ENCODE measurements at regions of chr16 and their contacts with region 1.

Region 1: GRCh38 chr16:77599793-77600415 is 122.4 kb upstream of the NUDT7 start:
- DNase-seq: peak in 1 of 2 donors; percentile 19
- ATAC-seq: no peak
- H3K4me3 ChIP-seq: no peak overlapping the region
- H3K27ac ChIP-seq: no peak overlapping the region
- H3K4me1 ChIP-seq: peaks cover 0 to 15% (median 0%) of the 10 kb centered on the region in 9 donors
- H3K27me3 ChIP-seq: no peaks in the 10 kb centered on the region
- CTCF ChIP-seq: peak; percentile 27 to 78 (median 67)

Region 2: GRCh38 chr16:77211880-77212740 is 387.8 kb before region 1 on chr16:
- intact Hi-C with region 1: no loop called
- DNase-seq: peak; percentile 17 to 53
- ATAC-seq: peak; percentile 52 to 67 (median 64)
- H3K4me3 ChIP-seq: peak overlapping the region; percentile 54 to 74 (median 64)
- H3K27ac ChIP-seq: peak overlapping the region in 8 of 10 donors; percentile 9 to 83 (median 63)
- H3K4me1 ChIP-seq: peaks cover 3 to 26% (median 23%) of the 10 kb centered on the region in 9 donors
- H3K27me3 ChIP-seq: peaks cover 0 to 22% (median 11%) of the 10 kb centered on the region in 7 donors
- CTCF ChIP-seq: no peak

Region 3: DNA sequence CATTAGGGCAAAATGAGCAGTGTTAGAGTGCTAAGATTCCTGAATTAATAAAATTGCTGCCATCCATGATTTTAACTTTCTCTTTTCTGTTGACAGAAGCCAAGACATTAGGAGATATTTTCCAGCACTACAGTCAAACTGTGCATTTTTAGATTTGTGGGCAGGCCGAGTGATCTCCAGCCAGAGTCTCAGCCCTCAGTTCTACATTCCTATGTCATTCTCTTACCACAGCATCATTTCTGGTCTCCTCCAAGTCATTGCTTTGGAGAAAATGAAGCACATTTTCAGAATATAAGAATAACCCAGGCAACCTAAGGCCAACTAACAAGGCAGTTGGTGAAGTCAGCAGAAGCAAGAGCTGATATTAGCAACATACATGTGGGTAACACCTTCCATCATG is 47.8 kb after region 1 on chr16:
- intact Hi-C with region 1: loop called in 2 of 10 experiments (anchors 5 kb)
- DNase-seq: no peak
- ATAC-seq: no peak
- H3K4me3 ChIP-seq: no peak overlapping the region
- H3K27ac ChIP-seq: no peak overlapping the region
- H3K4me1 ChIP-seq: no peaks in the 10 kb centered on the region
- H3K27me3 ChIP-seq: peaks cover 0 to 18% (median 6%) of the 10 kb centered on the region in 7 donors
- CTCF ChIP-seq: no peak

Region 4: DNA sequence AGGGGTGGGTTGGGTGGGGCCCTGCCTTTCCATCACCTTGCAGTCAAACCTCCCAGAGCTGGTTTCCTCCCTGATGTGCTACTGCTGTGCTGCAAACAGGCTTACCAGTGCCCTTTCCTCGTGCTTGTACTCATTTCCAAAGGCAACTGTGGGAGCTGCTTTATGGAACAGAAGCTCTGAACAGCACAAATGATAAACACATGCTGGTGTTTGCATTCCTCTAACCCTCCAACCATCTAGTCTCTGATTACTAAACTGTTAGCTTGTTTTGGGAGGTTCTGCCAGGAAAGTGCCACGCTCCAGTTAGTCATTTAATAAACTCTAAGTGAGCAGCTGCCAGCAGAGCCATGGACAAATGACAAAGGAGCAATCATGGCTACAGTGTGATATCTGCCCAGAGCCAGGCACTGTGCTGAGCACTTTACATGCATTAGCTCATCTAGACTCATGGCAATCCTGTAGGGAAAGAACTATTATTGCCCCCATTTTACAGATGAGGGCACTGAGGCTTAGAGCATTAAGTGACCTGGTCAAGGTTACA is 298.8 kb after region 1 on chr16:
- intact Hi-C with region 1: no loop called
- DNase-seq: no peak
- ATAC-seq: peak in 2 of 8 donors; percentile 18 to 54
- H3K4me3 ChIP-seq: no peak overlapping the region
- H3K27ac ChIP-seq: peak overlapping the region in 3 of 10 donors; percentile 5 to 25 (median 14)
- H3K4me1 ChIP-seq: peaks cover 0 to 29% (median 7%) of the 10 kb centered on the region in 9 donors
- H3K27me3 ChIP-seq: no peaks in the 10 kb centered on the region
- CTCF ChIP-seq: no peak

Measured in heart right ventricle (tissue), 16 donors.